Mammary epithelial cell (primary cell): ENCODE measurements at regions of chr17 and their contacts with region 1.

Region 1: DNA sequence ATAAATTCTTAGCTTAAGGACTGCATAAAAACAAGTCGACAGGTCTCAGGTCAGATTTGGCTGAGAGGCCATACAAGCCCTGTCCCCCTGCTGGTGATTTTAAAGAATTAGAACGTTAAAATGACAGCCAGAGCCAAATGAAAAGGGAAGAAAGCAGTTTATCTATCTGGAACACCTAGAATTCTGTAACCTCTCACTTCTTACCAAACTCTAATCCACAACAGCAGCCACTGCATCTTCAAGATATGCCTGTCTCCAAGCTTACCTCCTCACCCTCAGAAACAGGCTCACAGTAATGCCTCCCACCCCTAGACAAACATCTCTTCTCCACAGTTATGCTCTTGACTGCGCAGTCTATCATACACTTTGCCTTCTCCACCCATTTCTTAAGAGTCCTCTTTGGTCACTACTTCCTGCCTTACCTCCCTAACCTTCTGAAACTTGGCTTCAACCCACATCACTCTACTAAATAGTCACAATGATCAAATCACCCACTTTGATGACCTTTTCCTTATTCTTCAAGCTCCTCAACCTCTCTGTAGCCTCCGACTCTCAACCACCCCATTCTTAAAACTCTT is 14.2 kb downstream of the ANKFY1 start:
- DNase-seq: peak; percentile 32
- H3K4me3 ChIP-seq: no peak overlapping the region
- H3K27ac ChIP-seq: peak overlapping the region; percentile 96
- H3K4me1 ChIP-seq: peaks cover 27% of the 10 kb centered on the region
- H3K27me3 ChIP-seq: no peaks in the 10 kb centered on the region
- CTCF ChIP-seq: peak; percentile 65 to 66

Region 2: DNA sequence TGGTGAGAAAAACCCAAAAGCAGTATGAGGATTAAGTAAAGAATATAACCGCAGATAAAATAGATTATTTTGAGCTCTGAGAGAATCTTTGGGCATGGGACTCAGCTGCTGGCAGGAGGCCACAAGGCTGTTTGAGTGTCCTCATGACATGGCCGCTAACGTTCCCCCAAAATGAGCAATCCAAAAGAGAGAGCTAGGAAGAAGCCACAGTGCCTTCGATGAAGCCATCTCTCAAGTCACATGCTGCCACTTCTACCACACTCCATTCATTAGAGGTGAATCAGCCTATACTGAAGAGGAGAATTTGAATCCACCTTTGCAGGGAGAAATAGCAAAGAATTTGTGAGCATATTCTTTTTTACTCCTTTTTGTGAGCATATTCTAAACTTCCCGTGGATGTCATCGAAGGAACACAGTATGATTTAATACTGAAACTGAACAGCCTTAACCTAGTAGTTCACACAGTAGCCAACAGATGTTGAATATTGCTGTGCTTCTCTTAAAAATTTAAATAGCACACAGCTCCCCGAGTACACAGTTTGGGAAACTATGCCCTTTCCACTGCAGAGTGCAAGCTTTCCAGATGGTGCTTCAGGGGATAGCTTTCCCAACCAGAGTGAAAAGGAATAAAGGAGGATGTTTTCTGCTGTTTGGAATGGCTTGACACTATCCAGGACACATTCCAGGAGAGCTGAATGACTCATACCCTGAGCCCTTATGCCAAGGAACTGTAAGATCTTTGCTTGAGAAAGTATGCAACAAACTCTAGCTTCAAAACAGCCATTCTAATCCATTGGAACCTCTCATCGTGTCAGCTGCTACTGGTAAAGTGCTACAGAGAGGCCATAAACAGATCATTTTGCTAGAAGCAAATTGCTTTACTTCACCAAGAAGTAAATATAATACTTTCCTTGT is 19.7 kb before region 1 on chr17:
- CTCF ChIA-PET with region 1: no interaction called
- dilution Hi-C with region 1: no loop called
- in situ Hi-C with region 1: no loop called
- intact Hi-C with region 1: loop called (anchors 1 kb)
- DNase-seq: peak; percentile 75
- H3K4me3 ChIP-seq: peak overlapping the region in 2 of 3 experiments; percentile 3 to 9
- H3K27ac ChIP-seq: peak overlapping the region; percentile 28
- H3K4me1 ChIP-seq: peaks cover 45% of the 10 kb centered on the region
- H3K27me3 ChIP-seq: no peaks in the 10 kb centered on the region
- CTCF ChIP-seq: no peak

Region 3: DNA sequence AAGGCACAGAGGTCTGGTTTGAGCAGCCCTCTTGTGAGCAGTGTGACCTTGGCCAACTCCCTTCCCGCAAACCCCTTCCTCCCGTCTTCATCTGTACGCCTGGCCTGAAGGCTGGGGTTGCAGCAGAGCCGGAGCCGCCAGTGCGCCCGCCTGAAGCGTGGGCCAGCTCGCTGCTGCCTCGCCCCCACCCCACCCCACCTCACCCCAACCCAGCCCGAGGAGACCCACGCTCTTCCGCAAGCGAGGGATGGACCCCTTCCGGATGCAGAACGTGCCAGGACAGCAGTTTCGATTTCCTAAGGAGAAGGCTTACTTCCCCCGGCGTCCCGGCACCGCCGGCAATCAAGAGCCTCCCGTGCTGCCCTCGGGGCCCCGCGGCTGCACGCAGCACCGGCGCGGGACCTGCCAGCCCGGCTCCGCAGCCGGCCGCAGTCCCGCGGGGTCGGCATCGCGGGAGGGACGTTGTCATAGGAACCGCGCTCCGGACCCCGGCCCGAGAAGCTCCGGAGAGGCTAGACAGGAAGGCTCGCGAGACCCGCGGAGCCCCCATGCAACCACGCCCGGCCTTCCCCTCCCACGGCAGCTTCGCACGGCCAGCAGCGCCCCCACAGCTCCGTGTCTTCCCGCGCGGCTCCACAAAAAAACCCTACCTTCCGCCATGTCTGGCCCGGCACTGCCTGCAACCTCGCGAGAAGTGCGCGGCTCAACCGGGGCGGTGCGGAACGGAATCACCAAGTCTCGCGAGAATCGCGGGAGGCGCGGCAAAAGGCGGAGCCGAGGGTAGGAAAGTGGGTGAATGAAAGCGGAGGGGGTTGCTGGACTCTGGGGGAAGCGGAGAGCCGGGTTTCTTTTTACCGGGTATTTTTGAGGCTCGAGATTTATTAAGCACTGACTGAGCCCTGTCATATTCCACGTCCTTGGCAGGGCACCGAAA is 14.0 kb after region 1 on chr17 and contains the start of gene ANKFY1:
- CTCF ChIA-PET with region 1: no interaction called
- dilution Hi-C with region 1: no loop called
- in situ Hi-C with region 1: no loop called
- intact Hi-C with region 1: loop called (anchors 2 kb)
- DNase-seq: peak; percentile 90
- H3K4me3 ChIP-seq: peak within 1 kb of the TSS; percentile 71 to 97 (median 86)
- H3K27ac ChIP-seq: peak within 1 kb of the TSS; percentile 79
- H3K4me1 ChIP-seq: peaks cover 22% of the 10 kb centered on the region
- H3K27me3 ChIP-seq: no peaks in the 10 kb centered on the region
- CTCF ChIP-seq: peak in 1 of 2 donors; percentile 24
- total RNA-seq, gene ANKFY1: 45.4 to 46.2 TPM